Cardiac septum (tissue), 1 donor: ENCODE measurements at regions of chr5 and their contacts with region 1.

Region 1: DNA sequence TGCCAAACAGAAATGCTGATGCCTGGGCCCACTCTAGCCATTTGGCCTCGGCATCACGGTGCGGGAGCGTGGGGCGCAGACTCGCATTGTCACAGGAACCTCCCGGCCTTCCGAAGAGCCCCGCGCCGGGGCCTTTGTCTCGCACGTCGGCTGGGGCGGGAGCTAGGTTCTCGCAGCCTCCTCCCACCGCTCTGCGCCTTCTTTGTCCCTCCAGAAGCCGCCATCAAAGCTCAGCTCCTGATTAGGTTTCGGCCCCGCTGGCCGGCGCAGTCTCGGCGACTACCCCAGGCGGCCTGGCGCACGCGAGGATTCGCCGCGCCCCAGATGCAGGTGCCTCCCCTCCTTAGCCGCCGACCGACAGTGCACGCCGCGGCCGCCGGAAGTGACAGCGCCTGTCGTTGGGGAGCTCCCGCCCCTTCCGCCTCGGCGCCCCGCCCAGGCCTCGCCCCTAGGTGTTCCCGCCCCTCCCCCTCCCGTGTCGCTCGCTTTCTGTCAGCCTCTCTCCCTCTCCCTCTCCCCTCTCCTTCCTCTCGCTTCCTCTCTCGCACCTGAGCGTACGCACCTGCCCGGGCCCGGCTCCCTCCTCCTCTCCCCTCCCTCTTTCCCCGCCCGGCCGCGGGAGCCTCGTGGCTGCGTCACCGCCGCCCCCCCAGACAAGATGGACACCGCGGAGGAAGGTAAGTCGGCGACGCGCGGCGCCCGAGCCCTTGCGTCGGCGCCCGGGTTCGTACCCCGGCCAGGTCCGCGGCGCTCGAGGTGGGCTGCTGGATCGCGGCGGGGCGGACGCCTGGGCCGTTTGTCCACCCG is at the start of gene MARCHF6:
- DNase-seq: peak; percentile 97
- total RNA-seq, gene MARCHF6: 142 TPM

Region 2: GRCh38 chr5:10249948-10250803 is 103.3 kb before region 1 on chr5 and contains the start of gene CCT5:
- intact Hi-C with region 1: loop called (anchors 5 kb)
- DNase-seq: peak; percentile 96
- total RNA-seq, gene CCT5: 102 TPM

Region 3: GRCh38 chr5:10333154-10334006 is 20.1 kb before region 1 on chr5:
- intact Hi-C with region 1: loop called (anchors 1 kb)
- DNase-seq: peak; percentile 81

Region 4: GRCh38 chr5:10401498-10401897 is 48.1 kb after region 1 on chr5:
- intact Hi-C with region 1: loop called (anchors 5 kb)
- DNase-seq: no peak